ENCODE measurements at regions of chr20 and their contacts with region 1.

Region 1: DNA sequence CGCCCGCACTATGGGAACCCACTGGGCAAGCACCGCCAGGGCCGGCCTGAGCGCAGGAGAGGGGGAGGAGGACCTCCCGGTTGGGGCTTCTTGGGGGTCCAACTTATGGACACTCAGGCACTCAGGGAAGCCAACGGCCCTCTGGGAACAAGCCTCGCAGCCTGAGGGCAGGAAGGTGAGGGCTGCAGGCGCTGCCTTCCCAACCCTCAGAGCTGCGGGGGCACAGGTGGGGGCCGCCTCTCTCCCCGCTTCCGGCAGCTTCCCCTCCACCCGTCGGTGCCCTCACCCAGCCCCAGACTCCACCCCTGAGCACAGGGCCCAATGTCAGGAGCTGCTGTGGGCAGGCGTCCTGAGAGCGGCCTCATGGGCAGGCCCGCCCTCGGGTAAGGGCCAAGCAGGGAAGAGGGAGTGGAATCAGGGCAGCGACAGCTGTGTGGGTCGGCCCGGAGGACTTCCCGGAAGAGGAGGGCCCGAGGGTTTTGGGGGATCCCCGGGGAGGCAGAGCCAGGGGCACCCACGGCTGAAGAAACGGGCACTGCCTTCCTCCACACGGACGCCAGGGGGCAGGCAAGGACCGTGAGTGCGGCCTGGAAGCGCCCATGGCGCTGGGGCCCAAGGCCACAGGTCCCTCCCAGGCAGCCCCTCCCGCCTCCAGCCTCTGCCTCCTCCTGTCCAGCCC is 488 bp upstream of the PTK6 start:
- DNase-seq: peak; percentile 93
- ATAC-seq: peak; percentile 86
- H3K4me3 Mint-ChIP-seq: peak overlapping the region; percentile 80
- H3K27ac Mint-ChIP-seq: peak overlapping the region; percentile 80
- H3K4me1 Mint-ChIP-seq: peaks cover 27% of the 10 kb centered on the region
- H3K27me3 Mint-ChIP-seq: no peaks in the 10 kb centered on the region
- CTCF ChIP-seq: peak; percentile 23

Region 2: DNA sequence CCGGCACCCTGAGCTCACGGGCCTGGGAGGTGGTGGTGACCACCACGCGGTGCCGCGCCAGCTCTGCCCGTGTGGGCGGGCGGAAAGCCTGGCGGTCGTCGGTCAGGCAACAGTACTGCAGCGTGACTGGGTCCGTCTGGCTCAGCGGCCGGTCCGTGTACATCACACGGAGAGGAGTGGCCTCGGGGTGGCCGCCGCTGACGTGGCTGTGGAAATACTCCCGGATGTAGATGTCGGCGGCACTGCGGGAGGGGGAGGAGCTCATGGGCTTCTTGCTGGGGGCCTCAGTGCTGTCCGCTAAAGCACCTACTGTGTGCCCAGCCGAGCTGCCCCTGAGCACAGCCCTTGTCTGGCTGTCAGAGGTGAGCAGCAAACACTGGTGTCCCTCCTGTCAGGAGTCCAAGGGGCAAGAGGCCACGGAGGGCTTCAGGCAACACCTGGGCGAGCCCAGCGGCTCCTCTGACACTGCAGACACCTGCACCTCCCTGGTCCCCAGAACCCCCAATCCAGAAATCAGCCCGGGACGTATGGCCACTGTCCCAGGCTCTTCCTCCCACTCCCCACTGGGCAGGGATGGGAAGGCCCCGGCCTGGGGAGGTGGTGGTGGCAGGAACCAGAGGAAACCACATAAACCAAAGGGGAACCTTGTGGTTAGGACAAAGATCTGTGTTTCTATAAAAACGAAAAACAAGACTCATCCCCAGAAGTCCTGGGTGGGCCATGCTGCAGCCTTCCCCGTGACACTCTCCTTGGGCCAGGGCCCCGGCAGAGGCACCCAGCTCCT is 29.9 kb after region 1 on chr20:
- CTCF ChIA-PET with region 1: interaction called, 6 read pairs
- POLR2A ChIA-PET with region 1: interaction called, 23 read pairs
- intact Hi-C with region 1: loop called (anchors 1 kb)
- DNase-seq: peak; percentile 62
- ATAC-seq: peak; percentile 76
- H3K4me3 Mint-ChIP-seq: peak overlapping the region; percentile 68
- H3K27ac Mint-ChIP-seq: peak overlapping the region; percentile 75
- H3K4me1 Mint-ChIP-seq: peaks cover 31% of the 10 kb centered on the region
- H3K27me3 Mint-ChIP-seq: no peaks in the 10 kb centered on the region
- CTCF ChIP-seq: no peak

Region 3: GRCh38 chr20:63641792-63642544 is 104.3 kb after region 1 on chr20:
- CTCF ChIA-PET with region 1: interaction called, 27 read pairs
- POLR2A ChIA-PET with region 1: interaction called, 36 read pairs
- intact Hi-C with region 1: loop called (anchors 1 kb)
- DNase-seq: peak; percentile 92
- ATAC-seq: peak; percentile 76
- H3K4me3 Mint-ChIP-seq: peak overlapping the region; percentile 78
- H3K27ac Mint-ChIP-seq: peak overlapping the region; percentile 71
- H3K4me1 Mint-ChIP-seq: peaks cover 35% of the 10 kb centered on the region
- H3K27me3 Mint-ChIP-seq: no peaks in the 10 kb centered on the region
- CTCF ChIP-seq: no peak

Region 4: GRCh38 chr20:63775096-63775978 is 237.7 kb after region 1 on chr20:
- CTCF ChIA-PET with region 1: no interaction called
- POLR2A ChIA-PET with region 1: no interaction called
- intact Hi-C with region 1: no loop called
- DNase-seq: no peak
- ATAC-seq: no peak
- H3K4me3 Mint-ChIP-seq: no peak overlapping the region
- H3K27ac Mint-ChIP-seq: no peak overlapping the region
- H3K4me1 Mint-ChIP-seq: no peaks in the 10 kb centered on the region
- H3K27me3 Mint-ChIP-seq: peaks cover 2% of the 10 kb centered on the region
- CTCF ChIP-seq: no peak

Region 5: GRCh38 chr20:63791497-63792156 is 254.0 kb after region 1 on chr20:
- CTCF ChIA-PET with region 1: no interaction called
- POLR2A ChIA-PET with region 1: interaction called, 3 read pairs
- intact Hi-C with region 1: loop called (anchors 1 kb)
- DNase-seq: no peak
- ATAC-seq: no peak
- H3K4me3 Mint-ChIP-seq: no peak overlapping the region
- H3K27ac Mint-ChIP-seq: no peak overlapping the region
- H3K4me1 Mint-ChIP-seq: peaks cover 2% of the 10 kb centered on the region
- H3K27me3 Mint-ChIP-seq: no peaks in the 10 kb centered on the region
- CTCF ChIP-seq: no peak

Region 6: GRCh38 chr20:63973636-63974402 is 436.2 kb after region 1 on chr20:
- CTCF ChIA-PET with region 1: interaction called, 9 read pairs
- POLR2A ChIA-PET with region 1: interaction called, 13 read pairs
- intact Hi-C with region 1: loop called (anchors 1 kb)
- DNase-seq: peak; percentile 87
- ATAC-seq: peak; percentile 66
- H3K4me3 Mint-ChIP-seq: peak overlapping the region; percentile 8
- H3K27ac Mint-ChIP-seq: no peak overlapping the region
- H3K4me1 Mint-ChIP-seq: peaks cover 28% of the 10 kb centered on the region
- H3K27me3 Mint-ChIP-seq: no peaks in the 10 kb centered on the region
- CTCF ChIP-seq: peak; percentile 72

Measured in activated B cell treated with CpG ODN at 0.5 μM for 24 hours (primary cell).